ENCODE measurements at regions of chr9 and their contacts with region 1.

Region 1: GRCh38 chr9:114906908-114907571 is 23.4 kb downstream of the TNFSF8 start:
- DNase-seq: peak; percentile 50
- H3K4me3 Mint-ChIP-seq: no peak overlapping the region
- H3K27ac Mint-ChIP-seq: no peak overlapping the region
- H3K4me1 Mint-ChIP-seq: peaks cover 51% of the 10 kb centered on the region
- H3K27me3 Mint-ChIP-seq: no peaks in the 10 kb centered on the region
- CTCF ChIP-seq: peak; percentile 49

Region 2: DNA sequence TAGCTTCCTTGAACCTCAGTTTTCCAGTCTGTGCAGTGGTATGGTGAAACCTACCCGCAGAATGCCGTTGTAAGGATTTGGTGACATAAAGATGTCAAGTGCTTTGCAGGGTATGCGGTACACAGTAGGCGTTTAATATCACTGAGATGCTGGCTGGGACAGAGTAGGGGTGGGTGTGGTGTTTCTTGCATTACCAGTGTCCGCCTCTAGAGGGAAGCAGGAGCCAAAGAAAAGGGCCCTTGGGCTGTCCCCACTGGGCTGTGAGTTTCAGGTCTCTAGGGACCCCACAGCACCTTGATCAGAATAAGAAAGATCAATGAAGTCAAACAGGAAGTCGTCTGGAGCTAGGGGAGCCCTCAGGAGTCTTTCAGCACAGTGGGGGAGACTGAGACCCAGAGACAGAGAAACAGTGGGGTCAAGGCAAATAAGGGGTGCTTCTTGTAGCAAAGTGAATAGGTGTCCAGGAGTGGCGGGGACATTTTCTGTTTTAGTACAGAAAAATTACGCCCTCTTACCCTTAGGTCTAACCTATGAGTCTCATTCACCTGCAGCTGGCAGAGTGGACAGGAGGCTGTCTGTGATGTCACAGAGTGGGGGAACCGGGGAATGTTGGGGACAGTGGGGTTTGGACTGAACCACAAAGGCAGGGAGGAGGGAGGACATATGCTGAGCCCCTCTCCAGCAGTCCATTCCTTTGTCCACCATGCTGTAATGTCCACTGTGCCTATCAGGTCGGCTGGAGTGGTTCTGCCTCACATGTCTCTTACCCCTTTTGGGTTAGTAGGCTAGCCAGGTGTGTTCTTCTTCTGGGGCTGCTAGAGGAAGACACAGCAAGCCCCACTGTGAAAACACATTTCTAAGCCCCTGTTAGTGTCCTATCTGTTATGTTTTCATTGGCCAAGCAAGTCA is 244.7 kb before region 1 on chr9:
- CTCF ChIA-PET with region 1: interaction called, 15 read pairs
- POLR2A ChIA-PET with region 1: interaction called, 3 read pairs
- intact Hi-C with region 1: loop called (anchors 1 kb)
- DNase-seq: peak; percentile 64
- H3K4me3 Mint-ChIP-seq: no peak overlapping the region
- H3K27ac Mint-ChIP-seq: no peak overlapping the region
- H3K4me1 Mint-ChIP-seq: peaks cover 8% of the 10 kb centered on the region
- H3K27me3 Mint-ChIP-seq: no peaks in the 10 kb centered on the region
- CTCF ChIP-seq: peak; percentile 88

Region 3: DNA sequence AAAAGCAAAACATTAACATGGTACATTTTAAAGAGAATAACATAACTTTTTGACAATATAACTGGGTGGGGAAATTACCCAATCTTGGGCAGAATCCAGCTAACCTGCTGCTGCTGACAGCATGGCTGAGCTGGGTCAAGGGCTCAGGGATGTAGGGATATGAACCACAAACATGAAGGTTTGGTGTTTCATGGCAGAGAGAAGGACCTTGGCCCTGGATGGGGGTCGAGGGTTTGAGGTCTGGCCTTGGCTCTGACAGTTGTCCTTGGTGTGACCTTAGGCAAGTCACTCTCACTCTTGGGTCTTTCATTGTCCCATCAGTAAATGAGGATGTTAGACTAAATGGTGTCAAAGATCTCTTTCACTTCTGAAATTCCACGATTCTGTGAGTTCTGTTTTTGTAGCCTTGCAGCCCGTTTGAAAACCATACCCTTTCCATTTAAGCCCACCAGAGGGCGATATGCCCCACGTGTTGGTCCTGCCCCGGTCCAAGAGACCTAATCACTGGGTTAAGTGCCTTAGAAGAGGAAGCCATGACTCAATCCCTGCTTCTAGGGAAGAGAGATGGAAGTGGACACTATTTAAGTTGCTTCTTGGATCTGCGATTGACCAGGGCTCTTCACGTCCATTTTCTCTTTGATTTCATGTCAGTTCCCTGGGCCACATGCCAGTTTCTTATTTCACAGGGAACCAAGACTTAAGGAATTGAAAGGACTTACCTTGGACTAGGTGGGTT is 168.3 kb before region 1 on chr9:
- CTCF ChIA-PET with region 1: interaction called, 286 read pairs
- POLR2A ChIA-PET with region 1: interaction called, 10 read pairs
- intact Hi-C with region 1: loop called (anchors 1 kb)
- DNase-seq: peak; percentile 87
- H3K4me3 Mint-ChIP-seq: no peak overlapping the region
- H3K27ac Mint-ChIP-seq: no peak overlapping the region
- H3K4me1 Mint-ChIP-seq: peaks cover 23% of the 10 kb centered on the region
- H3K27me3 Mint-ChIP-seq: no peaks in the 10 kb centered on the region
- CTCF ChIP-seq: peak; percentile 85

Region 4: DNA sequence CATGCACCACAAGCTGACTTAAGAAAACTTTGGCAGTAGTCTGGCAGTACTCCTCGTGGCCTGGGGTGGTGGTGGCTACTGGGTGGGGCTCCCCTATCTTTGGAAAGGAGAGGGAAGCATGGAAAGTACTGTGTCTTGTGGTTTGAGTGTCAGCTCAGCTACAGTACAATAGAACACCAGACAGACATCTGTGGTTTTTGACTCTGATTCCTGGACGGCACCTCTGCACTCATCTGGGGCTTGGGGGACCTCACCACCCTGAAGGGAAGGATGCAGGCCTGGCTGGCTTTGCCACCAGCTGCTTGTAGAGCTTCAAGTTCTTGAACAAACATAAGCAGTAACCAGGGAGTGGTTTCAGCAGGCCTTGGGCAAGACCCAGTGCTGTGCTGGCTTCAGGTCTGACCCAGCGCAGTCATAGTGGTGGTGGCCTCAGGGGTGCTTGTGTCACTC is 17.2 kb before region 1 on chr9:
- CTCF ChIA-PET with region 1: interaction called, 25 read pairs
- POLR2A ChIA-PET with region 1: interaction called, 17 read pairs
- intact Hi-C with region 1: loop called (anchors 1 kb)
- DNase-seq: no peak
- H3K4me3 Mint-ChIP-seq: no peak overlapping the region
- H3K27ac Mint-ChIP-seq: peak overlapping the region; percentile 53
- H3K4me1 Mint-ChIP-seq: peaks cover 33% of the 10 kb centered on the region
- H3K27me3 Mint-ChIP-seq: no peaks in the 10 kb centered on the region
- CTCF ChIP-seq: no peak

Region 5: GRCh38 chr9:114925672-114926071 is 18.6 kb after region 1 on chr9:
- CTCF ChIA-PET with region 1: interaction called, 26 read pairs
- POLR2A ChIA-PET with region 1: no interaction called
- intact Hi-C with region 1: no loop called
- DNase-seq: no peak
- H3K4me3 Mint-ChIP-seq: no peak overlapping the region
- H3K27ac Mint-ChIP-seq: no peak overlapping the region
- H3K4me1 Mint-ChIP-seq: no peaks in the 10 kb centered on the region
- H3K27me3 Mint-ChIP-seq: peaks cover 12% of the 10 kb centered on the region
- CTCF ChIP-seq: no peak

Region 6: DNA sequence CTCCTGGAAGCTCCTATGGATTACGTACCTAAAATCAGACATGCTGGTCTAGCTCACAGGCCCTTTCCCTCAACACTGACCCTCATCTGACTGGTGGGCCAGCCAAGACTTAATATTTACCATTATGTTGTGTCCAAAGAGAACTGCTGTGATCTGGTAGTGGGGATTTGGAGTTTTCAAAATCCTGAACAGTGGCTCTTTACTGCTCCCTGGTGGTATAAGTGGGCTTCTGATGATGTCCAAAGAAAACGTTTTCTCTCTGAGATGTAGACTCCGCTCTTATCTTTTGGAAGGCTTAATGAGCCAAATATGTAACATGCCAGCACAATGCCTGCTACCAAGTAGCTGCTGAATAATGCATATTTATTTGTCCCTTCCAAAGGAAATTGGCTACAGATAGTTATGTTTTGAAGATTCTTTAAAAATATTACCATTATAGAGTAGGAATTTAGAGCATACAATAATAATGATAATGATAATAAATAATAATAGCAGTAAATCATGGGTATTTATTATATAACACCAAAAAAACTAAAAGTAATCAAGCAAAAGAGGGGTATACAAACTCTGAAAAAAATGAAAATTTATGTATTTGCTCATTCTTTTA is 617.5 kb after region 1 on chr9:
- CTCF ChIA-PET with region 1: no interaction called
- POLR2A ChIA-PET with region 1: no interaction called
- intact Hi-C with region 1: loop called (anchors 5 kb)
- DNase-seq: peak; percentile 73
- H3K4me3 Mint-ChIP-seq: no peak overlapping the region
- H3K27ac Mint-ChIP-seq: no peak overlapping the region
- H3K4me1 Mint-ChIP-seq: no peaks in the 10 kb centered on the region
- H3K27me3 Mint-ChIP-seq: no peaks in the 10 kb centered on the region
- CTCF ChIP-seq: peak; percentile 67